Activated naive CD4-positive, alpha-beta T cell treated with anti-CD3 and anti-CD28 coated beads for 36 hours (primary cell): ENCODE measurements at regions of chr4 and their contacts with region 1.

Region 1: DNA sequence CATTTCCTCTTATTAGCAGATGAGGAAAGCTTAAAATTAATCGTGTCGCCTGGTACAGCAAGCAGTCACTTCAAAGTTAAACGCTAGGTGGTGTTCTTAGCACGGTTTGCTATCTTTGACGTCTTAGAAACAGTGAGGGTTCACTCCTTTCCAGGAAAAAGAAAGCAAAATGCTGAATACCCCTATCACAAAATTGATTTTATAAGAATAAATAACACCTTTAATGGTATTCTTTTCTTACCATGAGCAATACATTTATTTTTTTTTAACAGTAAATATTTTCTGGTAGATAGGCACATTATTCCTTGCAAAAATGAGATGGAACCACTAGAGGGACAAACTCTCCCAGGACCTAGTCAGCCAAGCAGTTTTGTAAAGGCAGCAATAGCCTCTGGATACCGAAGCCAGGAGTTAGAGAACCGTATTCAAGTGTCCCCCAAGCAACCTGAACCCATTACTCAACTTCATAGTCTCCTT is 153.9 kb downstream of the KDR start:
- DNase-seq: peak; percentile 27
- H3K4me3 Mint-ChIP-seq: no peak overlapping the region
- H3K27ac Mint-ChIP-seq: no peak overlapping the region
- H3K4me1 Mint-ChIP-seq: peaks cover 2% of the 10 kb centered on the region
- H3K27me3 Mint-ChIP-seq: peaks cover 5% of the 10 kb centered on the region

Region 2: DNA sequence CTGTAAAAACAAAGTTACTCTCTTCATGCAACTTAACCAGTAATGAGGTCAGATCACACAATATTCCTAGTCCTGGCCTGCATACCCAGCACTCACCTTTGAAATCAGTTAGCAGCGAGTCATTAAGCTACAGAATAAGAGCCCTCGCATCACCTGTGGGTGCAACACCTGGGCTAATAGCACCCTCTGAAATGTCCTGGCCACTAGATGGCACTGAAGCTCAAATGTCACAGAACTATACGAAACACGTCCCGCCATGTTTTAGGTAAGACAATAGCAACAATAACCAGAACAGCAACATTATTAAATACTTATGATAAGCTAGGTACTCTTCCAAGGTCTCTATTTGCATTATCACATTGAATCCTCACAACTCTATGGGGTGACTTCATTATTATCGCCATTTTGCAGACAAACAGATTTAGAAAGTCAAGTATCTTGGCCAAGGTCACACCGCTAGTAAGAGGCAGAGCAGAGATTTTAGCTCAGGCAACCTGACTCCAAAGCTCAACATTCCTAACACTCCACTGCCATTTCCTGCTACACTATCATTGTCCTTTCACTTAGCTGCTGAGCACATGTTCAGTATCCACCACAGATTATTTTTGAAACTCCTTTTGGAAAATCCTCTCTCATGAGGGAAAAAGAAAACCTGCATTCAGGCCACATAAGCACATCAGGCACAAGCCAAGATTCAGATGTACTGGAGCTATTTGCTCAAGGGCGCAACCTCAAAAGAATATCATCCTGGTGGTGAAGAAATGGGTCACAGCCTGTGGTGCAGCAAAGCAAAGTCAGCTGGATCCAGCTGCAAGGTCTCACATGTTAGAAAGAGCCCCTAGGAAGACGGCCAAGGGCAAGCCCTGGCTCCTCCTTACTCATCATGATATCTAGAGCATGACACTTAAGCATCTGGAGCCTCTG is 213.3 kb after region 1 on chr4:
- CTCF ChIA-PET with region 1: interaction called, 6 read pairs
- intact Hi-C with region 1: loop called (anchors 5 kb)
- DNase-seq: peak; percentile 54
- H3K4me3 Mint-ChIP-seq: no peak overlapping the region
- H3K27ac Mint-ChIP-seq: no peak overlapping the region
- H3K4me1 Mint-ChIP-seq: no peaks in the 10 kb centered on the region
- H3K27me3 Mint-ChIP-seq: no peaks in the 10 kb centered on the region

Region 3: DNA sequence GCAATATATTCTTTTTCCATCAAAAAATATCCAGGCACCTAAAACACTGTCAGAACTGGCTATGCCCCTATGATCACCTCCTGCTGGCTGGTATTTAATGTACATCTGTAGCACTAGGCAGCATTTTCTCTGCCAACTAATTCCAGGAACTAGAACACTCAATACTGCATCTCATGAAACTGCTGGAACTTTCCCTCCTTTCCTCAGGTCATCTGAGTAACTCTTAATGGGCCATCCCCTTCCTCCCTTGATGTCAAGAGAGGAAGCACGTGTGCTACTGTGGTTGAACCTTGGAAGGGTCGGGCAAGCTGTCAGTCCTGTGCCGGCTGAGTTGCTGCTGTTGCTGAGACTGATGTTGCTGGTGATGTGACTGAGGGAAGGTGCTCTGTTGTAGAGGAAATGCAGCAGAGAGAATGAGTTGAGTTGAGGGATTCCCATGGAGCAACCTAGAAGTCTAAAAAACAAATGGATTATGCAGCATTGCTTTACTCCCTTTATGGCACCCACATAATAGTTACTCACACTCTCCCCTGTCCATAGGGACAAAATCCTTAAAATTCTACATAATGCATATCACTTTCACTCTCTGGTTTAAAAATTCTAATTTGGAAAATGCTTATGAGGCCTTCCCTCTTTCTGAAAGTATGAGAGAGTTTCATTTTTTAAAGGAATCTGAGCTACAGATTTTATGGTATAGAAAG is 463.8 kb after region 1 on chr4:
- CTCF ChIA-PET with region 1: no interaction called
- intact Hi-C with region 1: loop called (anchors 10 kb)
- DNase-seq: peak; percentile 68
- H3K4me3 Mint-ChIP-seq: no peak overlapping the region
- H3K27ac Mint-ChIP-seq: peak overlapping the region; percentile 37
- H3K4me1 Mint-ChIP-seq: peaks cover 16% of the 10 kb centered on the region
- H3K27me3 Mint-ChIP-seq: no peaks in the 10 kb centered on the region

Region 4: DNA sequence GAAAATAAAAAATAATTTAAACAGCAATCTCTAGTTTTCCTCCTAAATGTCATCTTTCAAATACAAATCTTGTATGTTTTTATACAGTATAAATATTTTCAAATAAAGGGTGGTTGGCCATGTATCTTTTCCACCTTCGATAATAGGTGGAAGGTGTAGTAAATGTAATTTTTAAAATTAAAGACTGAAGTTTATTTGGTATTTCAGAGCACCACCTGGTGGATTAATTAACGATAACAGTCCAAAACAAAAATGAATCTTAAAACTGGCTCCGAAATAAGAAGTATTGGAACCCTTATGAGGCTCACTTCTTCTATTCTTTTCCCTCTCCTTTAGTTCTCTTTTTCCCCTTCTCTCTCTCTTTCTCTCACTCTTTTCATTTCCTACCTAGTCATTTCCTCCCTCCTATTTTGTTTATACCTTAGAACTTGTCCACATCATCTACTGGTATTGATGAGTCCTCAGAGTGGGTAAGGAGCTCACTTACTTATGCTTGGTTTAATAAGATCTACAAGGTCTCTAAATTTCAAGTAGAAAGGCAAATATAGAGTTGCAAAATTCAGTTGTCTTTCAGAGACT is 765.2 kb after region 1 on chr4:
- CTCF ChIA-PET with region 1: interaction called, 4 read pairs
- intact Hi-C with region 1: loop called (anchors 1 kb)
- DNase-seq: no peak
- H3K4me3 Mint-ChIP-seq: no peak overlapping the region
- H3K27ac Mint-ChIP-seq: no peak overlapping the region
- H3K4me1 Mint-ChIP-seq: no peaks in the 10 kb centered on the region
- H3K27me3 Mint-ChIP-seq: peaks cover 34% of the 10 kb centered on the region